Activated naive CD4-positive, alpha-beta T cell treated with anti-CD3 and anti-CD28 coated beads for 36 hours (primary cell): ENCODE measurements at regions of chr6 and their contacts with region 1.

Region 1: GRCh38 chr6:28809947-28810658 is 113.7 kb downstream of the TRIM27 start:
- DNase-seq: no peak
- H3K4me3 Mint-ChIP-seq: peak overlapping the region; percentile 11
- H3K27ac Mint-ChIP-seq: no peak overlapping the region
- H3K4me1 Mint-ChIP-seq: peaks cover 15% of the 10 kb centered on the region
- H3K27me3 Mint-ChIP-seq: peaks cover 84% of the 10 kb centered on the region

Region 2: GRCh38 chr6:27816906-27817305 is 993.2 kb before region 1 on chr6:
- CTCF ChIA-PET with region 1: no interaction called
- intact Hi-C with region 1: no loop called
- DNase-seq: no peak
- H3K4me3 Mint-ChIP-seq: no peak overlapping the region
- H3K27ac Mint-ChIP-seq: peak overlapping the region; percentile 41
- H3K4me1 Mint-ChIP-seq: peaks cover 17% of the 10 kb centered on the region
- H3K27me3 Mint-ChIP-seq: no peaks in the 10 kb centered on the region

Region 3: GRCh38 chr6:28710466-28711191 is 99.5 kb before region 1 on chr6:
- CTCF ChIA-PET with region 1: no interaction called
- intact Hi-C with region 1: no loop called
- DNase-seq: peak; percentile 33
- H3K4me3 Mint-ChIP-seq: peak overlapping the region; percentile 38
- H3K27ac Mint-ChIP-seq: no peak overlapping the region
- H3K4me1 Mint-ChIP-seq: peaks cover 6% of the 10 kb centered on the region
- H3K27me3 Mint-ChIP-seq: peaks cover 71% of the 10 kb centered on the region

Region 4: GRCh38 chr6:28769626-28770402 is 40.3 kb before region 1 on chr6:
- CTCF ChIA-PET with region 1: no interaction called
- intact Hi-C with region 1: loop called (anchors 5 kb)
- DNase-seq: no peak
- H3K4me3 Mint-ChIP-seq: no peak overlapping the region
- H3K27ac Mint-ChIP-seq: no peak overlapping the region
- H3K4me1 Mint-ChIP-seq: peaks cover 7% of the 10 kb centered on the region
- H3K27me3 Mint-ChIP-seq: peaks cover 97% of the 10 kb centered on the region

Region 5: DNA sequence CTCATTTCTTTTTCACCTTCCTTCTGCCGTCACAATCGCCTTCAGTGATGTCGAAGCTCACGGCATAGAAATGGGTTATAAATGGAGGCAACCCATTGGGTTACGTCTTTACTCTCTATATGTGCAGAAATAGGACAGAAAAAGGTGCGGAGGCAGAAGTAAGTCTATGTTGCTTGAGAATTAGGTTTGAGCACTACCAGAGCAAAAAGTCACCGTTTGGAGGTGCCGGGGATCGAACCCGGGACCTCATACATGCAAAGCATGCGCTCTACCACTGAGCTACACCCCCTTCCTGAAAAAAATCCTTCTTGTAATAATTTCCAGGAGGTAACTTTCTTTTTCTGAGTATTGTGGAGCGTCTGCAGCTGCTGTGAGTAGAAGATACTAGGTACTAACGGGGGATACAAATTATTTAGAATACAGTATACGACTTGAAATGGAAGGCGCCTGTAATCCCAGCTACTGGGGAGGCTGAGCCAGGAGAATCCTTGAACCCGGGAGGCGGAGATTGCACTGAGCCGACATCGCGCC is 20.5 kb before region 1 on chr6:
- CTCF ChIA-PET with region 1: no interaction called
- intact Hi-C with region 1: loop called (anchors 2 kb)
- DNase-seq: peak; percentile 42
- H3K4me3 Mint-ChIP-seq: peak overlapping the region; percentile 69
- H3K27ac Mint-ChIP-seq: peak overlapping the region; percentile 10
- H3K4me1 Mint-ChIP-seq: peaks cover 14% of the 10 kb centered on the region
- H3K27me3 Mint-ChIP-seq: peaks cover 86% of the 10 kb centered on the region

Region 6: GRCh38 chr6:29336269-29336668 is 526.2 kb after region 1 on chr6:
- CTCF ChIA-PET with region 1: no interaction called
- intact Hi-C with region 1: no loop called
- DNase-seq: no peak
- H3K4me3 Mint-ChIP-seq: no peak overlapping the region
- H3K27ac Mint-ChIP-seq: no peak overlapping the region
- H3K4me1 Mint-ChIP-seq: no peaks in the 10 kb centered on the region
- H3K27me3 Mint-ChIP-seq: peaks cover 45% of the 10 kb centered on the region

Region 7: DNA sequence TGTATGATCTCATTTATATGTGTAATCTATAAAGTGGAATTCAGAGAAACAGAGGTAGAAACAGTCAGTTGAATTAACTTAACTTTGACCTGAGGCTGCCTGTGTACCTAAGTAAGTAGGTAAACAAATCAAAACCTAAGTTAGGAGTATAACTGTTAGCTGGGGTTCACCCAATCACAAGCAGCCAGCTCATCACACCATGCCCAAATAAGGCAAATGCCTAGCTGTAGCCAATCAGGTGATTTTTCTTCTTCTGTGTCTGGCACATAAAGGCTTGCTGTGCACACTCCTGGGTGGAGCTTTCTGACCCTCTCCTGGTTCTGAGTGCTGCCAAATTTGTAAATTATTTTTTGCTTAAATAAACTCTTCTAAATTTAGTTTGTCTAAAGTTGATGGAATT is 1461.9 kb after region 1 on chr6:
- CTCF ChIA-PET with region 1: no interaction called
- intact Hi-C with region 1: no loop called
- DNase-seq: no peak
- H3K4me3 Mint-ChIP-seq: no peak overlapping the region
- H3K27ac Mint-ChIP-seq: no peak overlapping the region
- H3K4me1 Mint-ChIP-seq: no peaks in the 10 kb centered on the region
- H3K27me3 Mint-ChIP-seq: no peaks in the 10 kb centered on the region